Ovary (tissue), 10 donors: ENCODE measurements at regions of chrX and their contacts with region 1.

Region 1: DNA sequence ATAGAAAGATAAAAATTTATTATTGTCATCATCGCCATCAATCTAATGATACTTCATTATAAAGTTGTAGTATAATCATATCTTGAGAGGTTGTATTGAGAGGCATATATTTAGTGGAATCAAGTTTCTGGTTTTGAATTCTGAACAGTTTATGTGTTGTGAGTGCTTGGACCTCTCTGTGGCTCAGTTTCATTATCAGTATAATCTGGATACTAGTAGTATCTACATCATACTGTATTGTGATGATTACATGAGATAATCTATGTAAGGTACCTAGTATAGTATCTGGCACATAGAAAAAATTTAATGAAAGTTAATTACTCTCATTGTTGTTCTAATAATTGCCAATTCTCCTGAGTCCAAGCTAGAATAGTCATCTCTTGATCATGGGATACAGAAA is 161.2 kb upstream of the UBQLN2 start:
- DNase-seq: no peak
- H3K4me3 ChIP-seq: no peak overlapping the region
- H3K27ac ChIP-seq: no peak overlapping the region
- H3K4me1 ChIP-seq: no peaks in the 10 kb centered on the region
- H3K27me3 ChIP-seq: no peaks in the 10 kb centered on the region
- CTCF ChIP-seq: no peak
- EP300 ChIP-seq: no peak
- POLR2A ChIP-seq: no peak

Region 2: DNA sequence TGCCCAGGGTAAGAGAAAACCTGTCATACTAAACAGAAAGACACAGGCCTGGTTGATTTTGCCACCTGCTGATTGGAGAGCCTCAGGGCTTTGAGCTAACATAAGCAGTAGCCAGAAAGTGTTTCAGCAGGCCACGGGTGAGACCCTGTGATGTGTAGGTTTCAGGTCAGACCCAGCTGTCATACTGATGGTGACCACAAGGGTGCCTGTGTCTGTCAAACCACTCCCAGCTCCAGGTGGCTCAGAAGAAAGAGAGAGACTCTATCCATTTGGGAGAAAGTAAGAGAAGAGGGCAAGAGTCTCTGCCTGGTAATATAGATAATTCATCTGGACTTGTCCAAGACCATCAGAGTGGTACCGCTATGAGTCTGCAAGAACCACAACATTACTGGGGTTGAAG is 1350.7 kb after region 1 on chrX:
- intact Hi-C with region 1: loop called in 1 of 4 experiments (anchors 5 kb)
- DNase-seq: no peak
- H3K4me3 ChIP-seq: no peak overlapping the region
- H3K27ac ChIP-seq: no peak overlapping the region
- H3K4me1 ChIP-seq: no peaks in the 10 kb centered on the region
- H3K27me3 ChIP-seq: no peaks in the 10 kb centered on the region
- CTCF ChIP-seq: no peak
- EP300 ChIP-seq: no peak
- POLR2A ChIP-seq: no peak